ENCODE measurements at regions of chr7 and their contacts with region 1.

Region 1: DNA sequence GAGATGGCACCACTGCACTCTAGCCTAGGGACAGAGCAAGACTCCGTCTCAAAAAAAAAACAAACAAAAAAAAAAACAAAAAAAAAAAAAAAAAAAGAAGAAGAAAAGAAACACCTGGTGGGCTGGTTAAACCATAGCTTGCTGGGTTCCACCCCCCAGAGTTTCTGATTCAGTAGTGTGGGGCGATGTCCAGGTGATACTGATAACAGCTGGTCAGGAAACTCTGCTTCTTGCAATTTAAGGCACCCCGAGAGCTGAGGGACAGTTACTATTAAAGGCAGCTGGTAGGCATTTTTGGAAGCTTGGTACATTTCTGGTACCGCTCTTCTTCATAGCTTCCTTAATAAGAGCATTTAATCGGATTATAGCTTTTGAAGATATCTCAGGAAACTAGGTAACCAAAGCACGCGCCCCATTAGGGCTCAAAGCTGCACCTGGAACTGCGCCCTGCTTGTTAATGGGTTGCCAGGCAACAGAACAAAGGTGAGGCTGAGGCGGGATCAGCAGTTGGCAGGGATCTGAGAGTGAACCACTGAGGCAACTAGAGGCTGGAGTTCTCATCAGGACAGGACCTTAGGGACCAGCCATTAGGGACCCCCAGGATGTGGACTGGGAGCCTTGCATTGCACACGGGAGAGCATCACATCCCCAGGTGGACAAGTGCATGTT is 6.5 kb upstream of the SDK1 start:
- DNase-seq: no peak
- ATAC-seq: no peak
- H3K4me3 ChIP-seq: no peak overlapping the region
- H3K27ac ChIP-seq: no peak overlapping the region
- H3K4me1 ChIP-seq: peaks cover 3% of the 10 kb centered on the region; the same call in 1 of the 2 replicates
- H3K27me3 ChIP-seq: no peaks in the 10 kb centered on the region
- CTCF ChIP-seq: no peak

Region 2: GRCh38 chr7:2886900-2887299 is 407.7 kb before region 1 on chr7:
- CTCF ChIA-PET with region 1: no interaction called
- POLR2A ChIA-PET with region 1: interaction called, 7 read pairs
- in situ Hi-C with region 1: no loop called
- intact Hi-C with region 1: loop called (anchors 10 kb)
- DNase-seq: peak; percentile 47
- ATAC-seq: peak; percentile 89
- H3K4me3 ChIP-seq: no peak overlapping the region
- H3K27ac ChIP-seq: no peak overlapping the region
- H3K4me1 ChIP-seq: peaks cover 18% of the 10 kb centered on the region
- H3K27me3 ChIP-seq: no peaks in the 10 kb centered on the region
- CTCF ChIP-seq: peak; percentile 99

Region 3: GRCh38 chr7:3094701-3095445 is 199.7 kb before region 1 on chr7:
- CTCF ChIA-PET with region 1: no interaction called
- POLR2A ChIA-PET with region 1: no interaction called
- in situ Hi-C with region 1: no loop called
- intact Hi-C with region 1: no loop called
- DNase-seq: no peak
- ATAC-seq: no peak
- H3K4me3 ChIP-seq: no peak overlapping the region
- H3K27ac ChIP-seq: no peak overlapping the region
- H3K4me1 ChIP-seq: no peaks in the 10 kb centered on the region
- H3K27me3 ChIP-seq: no peaks in the 10 kb centered on the region
- CTCF ChIP-seq: no peak

Region 4: DNA sequence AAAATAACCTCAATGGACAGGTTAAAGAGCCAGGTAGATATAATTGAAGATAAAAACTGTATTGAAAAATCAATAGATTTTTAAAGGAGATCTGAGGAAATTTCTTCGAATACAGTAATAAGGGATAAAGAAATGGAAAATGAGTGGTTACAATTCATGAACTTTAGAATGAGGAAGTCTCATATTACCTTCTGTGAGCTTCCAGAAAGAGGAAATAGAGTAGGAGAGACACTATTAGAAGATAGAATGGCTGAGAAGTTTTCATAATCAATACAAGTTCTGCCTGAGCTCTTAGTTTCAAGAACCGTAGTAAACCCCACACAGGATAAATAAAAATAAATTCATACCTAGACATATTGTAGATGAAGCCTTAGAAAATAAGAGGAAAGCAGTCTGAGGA is 18.0 kb after region 1 on chr7:
- CTCF ChIA-PET with region 1: no interaction called
- POLR2A ChIA-PET with region 1: interaction called, 10 read pairs
- in situ Hi-C with region 1: no loop called
- intact Hi-C with region 1: no loop called
- DNase-seq: no peak
- ATAC-seq: no peak
- H3K4me3 ChIP-seq: no peak overlapping the region
- H3K27ac ChIP-seq: no peak overlapping the region
- H3K4me1 ChIP-seq: peaks cover 28% of the 10 kb centered on the region; the same call in 1 of the 2 replicates
- H3K27me3 ChIP-seq: no peaks in the 10 kb centered on the region
- CTCF ChIP-seq: no peak

Region 5: GRCh38 chr7:3415861-3416312 is 121.3 kb after region 1 on chr7:
- CTCF ChIA-PET with region 1: no interaction called
- POLR2A ChIA-PET with region 1: interaction called, 10 read pairs
- in situ Hi-C with region 1: no loop called
- intact Hi-C with region 1: no loop called
- DNase-seq: no peak
- ATAC-seq: no peak
- H3K4me3 ChIP-seq: no peak overlapping the region
- H3K27ac ChIP-seq: peak overlapping the region; percentile 4; the same call in 1 of the 2 replicates
- H3K4me1 ChIP-seq: peaks cover 36% of the 10 kb centered on the region
- H3K27me3 ChIP-seq: no peaks in the 10 kb centered on the region
- CTCF ChIP-seq: no peak

Region 6: GRCh38 chr7:3592401-3593135 is 298.0 kb after region 1 on chr7:
- CTCF ChIA-PET with region 1: no interaction called
- POLR2A ChIA-PET with region 1: no interaction called
- in situ Hi-C with region 1: no loop called
- intact Hi-C with region 1: no loop called
- DNase-seq: peak; percentile 41
- ATAC-seq: peak; percentile 92
- H3K4me3 ChIP-seq: peak overlapping the region; percentile 34 to 60
- H3K27ac ChIP-seq: peak overlapping the region; percentile 98
- H3K4me1 ChIP-seq: peaks cover 57% of the 10 kb centered on the region
- H3K27me3 ChIP-seq: no peaks in the 10 kb centered on the region
- CTCF ChIP-seq: peak; percentile 74

Measured in Panc1 (cell line).